PC-9 (cell line): ENCODE measurements at regions of chr4 and their contacts with region 1.

Region 1: DNA sequence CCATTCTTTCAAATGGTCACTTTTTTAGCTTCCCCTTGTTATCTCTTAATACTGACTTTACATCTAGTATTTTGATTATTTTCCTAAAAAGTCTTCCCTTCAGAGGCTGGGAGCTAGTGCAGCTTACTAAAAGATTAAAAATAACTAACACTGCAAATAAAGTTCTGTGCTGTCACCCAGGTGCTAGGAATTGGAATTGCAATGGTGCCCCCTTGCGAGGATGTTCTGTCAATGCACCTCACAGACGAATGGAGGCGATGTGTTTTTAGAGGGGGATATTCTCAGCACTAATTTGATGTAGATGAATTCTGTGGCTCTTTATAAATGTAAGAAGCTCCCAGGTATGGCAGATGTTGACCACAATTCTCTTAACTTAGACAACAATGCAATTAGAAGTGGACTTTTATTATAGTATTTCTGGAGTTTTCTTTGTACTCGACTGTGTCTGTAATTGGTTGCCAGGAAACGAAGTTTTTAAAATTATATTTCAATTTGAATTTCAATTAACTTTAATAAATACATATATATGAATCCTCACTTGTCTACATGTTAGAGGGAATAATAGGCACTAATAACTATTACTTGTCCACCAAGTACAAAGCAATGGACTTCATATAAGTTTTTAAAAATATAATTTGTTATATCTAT is 22.0 kb upstream of the SMIM31 start:
- DNase-seq: peak in 1 of 2 experiments; percentile 56
- H3K4me3 ChIP-seq: no peak overlapping the region
- H3K27ac ChIP-seq: no peak overlapping the region
- H3K4me1 ChIP-seq: no peaks in the 10 kb centered on the region
- H3K27me3 ChIP-seq: no peaks in the 10 kb centered on the region
- CTCF ChIP-seq: peak; percentile 84

Region 2: GRCh38 chr4:164012396-164013027 is 719.4 kb before region 1 on chr4:
- CTCF ChIA-PET with region 1: no interaction called
- POLR2A ChIA-PET with region 1: no interaction called
- intact Hi-C with region 1: loop called (anchors 10 kb)
- DNase-seq: no peak
- H3K4me3 ChIP-seq: no peak overlapping the region
- H3K27ac ChIP-seq: no peak overlapping the region
- H3K4me1 ChIP-seq: no peaks in the 10 kb centered on the region
- H3K27me3 ChIP-seq: no peaks in the 10 kb centered on the region
- CTCF ChIP-seq: peak; percentile 53; the same call in 1 of the 2 replicates